GM10248 (cell line): ENCODE measurements at regions of chr3 and their contacts with region 1.

Region 1: DNA sequence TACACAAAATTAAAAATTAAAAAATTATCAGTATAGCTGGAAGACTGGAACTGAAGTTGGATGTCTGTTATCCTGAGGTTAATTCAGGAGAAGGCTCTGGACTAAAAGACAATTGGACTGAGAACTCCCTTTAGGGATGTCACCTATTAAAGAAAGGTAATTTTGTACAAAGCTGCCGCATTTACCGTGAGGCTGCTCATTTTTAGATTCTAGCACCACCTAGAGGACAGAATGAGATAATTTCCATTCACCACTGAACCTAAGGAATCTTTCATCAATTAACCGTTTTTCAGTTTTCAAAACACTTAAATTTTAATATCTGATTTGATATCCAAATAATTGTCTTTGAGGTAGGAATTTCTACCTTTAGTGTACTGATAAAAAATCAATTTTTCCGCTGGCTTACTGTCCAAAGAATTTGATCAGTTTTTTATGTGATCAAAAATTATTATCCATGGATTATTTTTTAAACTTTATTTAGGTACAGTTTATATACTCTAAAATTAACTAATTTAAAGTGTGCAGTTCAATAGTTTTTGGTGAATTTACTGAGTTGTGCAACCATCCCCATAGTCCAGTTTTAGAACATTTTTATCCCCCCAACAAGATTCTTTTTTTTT is 106.7 kb upstream of the TNIK start:
- DNase-seq: peak; percentile 56
- CTCF ChIP-seq: peak; percentile 63

Region 2: GRCh38 chr3:171049861-171050444 is 517.0 kb before region 1 on chr3:
- CTCF ChIA-PET with region 1: interaction called, 75 read pairs
- POLR2A ChIA-PET with region 1: no interaction called
- DNase-seq: peak; percentile 54
- CTCF ChIP-seq: peak; percentile 55

Region 3: GRCh38 chr3:171187706-171188290 is 379.1 kb before region 1 on chr3:
- CTCF ChIA-PET with region 1: interaction called, 25 read pairs
- POLR2A ChIA-PET with region 1: no interaction called
- DNase-seq: peak; percentile 26
- CTCF ChIP-seq: peak; percentile 69

Region 4: GRCh38 chr3:171556148-171557145 is 10.5 kb before region 1 on chr3:
- CTCF ChIA-PET with region 1: interaction called, 15 read pairs
- POLR2A ChIA-PET with region 1: no interaction called
- DNase-seq: no peak
- CTCF ChIP-seq: no peak